ENCODE measurements at regions of chr1 and their contacts with region 1.

Region 1: DNA sequence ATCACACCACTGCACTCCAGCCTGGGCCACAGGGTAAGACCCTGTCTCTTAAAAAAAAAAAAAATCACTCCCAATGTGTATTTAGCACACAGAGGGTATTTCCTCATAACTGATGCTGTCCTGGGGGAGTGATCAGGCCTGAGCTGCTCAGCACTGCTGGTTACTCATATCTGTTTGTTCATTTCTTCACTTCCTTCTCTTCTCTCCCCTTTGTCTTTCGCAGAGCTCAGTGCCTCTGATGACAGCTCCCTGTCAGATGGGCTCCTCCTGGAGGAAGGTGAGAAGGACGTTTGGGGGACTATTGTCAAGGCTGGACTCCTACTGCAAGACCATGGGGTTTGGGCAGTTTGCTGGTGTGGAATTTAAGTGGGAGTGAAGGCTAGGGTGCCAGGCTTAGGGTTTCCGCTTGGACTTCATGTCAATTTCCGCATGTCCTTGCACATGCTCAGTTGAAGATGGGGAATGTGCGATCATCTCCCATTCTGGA is 13.0 kb downstream of the INAVA start:
- DNase-seq: peak; percentile 72
- CTCF ChIP-seq: no peak

Region 2: DNA sequence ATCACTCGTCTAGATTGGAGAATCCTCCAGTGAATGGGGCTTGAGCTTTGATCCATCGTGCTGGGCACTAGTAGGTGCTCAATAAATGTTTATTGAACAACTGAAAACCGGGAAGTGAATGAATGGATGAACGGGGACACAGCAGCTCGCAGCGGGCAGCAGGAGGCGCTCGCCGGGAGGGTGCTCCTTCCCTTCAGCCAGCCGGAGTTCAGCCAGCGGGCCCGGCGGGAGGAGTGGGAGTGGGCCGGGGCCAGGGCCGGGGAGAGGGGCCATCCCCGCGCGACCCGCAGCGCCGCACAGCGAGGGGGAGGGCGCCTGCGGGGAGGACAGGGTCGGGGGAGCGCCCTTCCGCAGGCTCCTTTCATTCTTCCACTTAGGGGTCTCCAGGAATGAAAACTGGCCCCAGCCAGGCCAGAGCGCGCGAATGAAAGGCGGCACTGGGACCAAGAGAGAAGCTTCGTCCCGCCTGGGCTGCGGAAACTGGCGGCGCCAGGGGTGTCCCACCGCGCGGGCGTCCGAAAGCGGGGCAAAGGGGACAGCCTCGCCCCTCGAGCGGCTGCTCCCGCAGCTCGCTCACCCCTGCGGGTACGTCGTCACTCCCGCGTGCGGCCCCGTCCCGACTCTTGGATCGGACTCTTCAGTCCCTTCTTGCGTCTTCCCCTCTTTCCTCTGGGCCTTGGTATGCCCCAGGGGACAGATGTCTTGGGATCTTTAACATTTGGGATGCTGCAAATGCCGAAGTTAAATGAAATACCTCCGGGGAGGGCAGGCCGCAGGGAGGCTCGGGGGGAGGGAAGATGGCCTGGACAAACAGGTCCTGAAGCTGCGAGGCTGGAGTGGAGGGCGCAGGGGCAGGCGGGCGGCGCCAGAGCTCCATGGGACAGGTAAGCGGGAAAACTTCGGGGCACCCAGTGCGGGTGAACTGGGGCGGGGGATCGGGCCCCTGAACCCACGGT is 16.6 kb before region 1 on chr1:
- CTCF ChIA-PET with region 1: interaction called, 26 read pairs
- POLR2A ChIA-PET with region 1: no interaction called
- DNase-seq: no peak
- CTCF ChIP-seq: peak; percentile 72

Region 3: DNA sequence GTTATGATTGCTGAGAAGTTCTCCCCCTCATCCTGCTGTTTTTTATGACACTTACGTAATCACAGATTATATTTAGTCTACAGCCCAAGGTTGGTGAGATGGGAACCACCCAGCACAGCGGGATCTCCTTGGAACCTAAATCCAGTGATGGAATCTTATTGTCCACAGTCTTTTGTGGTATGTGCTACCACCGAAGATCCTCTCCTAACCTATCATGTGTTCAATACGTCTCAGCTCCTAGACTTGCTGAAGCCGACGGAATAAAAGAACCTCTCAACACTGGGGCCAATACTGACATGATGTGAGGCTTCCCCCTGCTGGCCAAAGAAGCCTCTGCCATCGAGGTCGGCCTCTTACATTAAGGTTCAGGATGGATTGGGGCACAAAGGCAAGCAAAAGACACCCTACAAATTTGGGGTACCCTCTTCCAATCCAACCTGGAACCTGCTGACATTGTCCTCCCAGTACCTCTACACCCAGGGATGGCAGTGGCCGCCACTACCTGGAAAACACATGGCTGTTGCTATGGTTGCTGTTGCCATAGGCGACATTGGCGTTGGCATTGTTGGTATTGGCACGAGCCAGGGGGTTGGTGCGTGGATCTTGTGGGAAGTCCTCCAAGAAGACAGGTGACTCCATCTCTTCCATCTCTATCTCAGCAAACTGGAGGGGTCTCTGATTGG is 135.3 kb after region 1 on chr1:
- CTCF ChIA-PET with region 1: interaction called, 10 read pairs
- POLR2A ChIA-PET with region 1: no interaction called
- DNase-seq: peak; percentile 79
- CTCF ChIP-seq: peak; percentile 94

Measured in GM10248 (cell line).